AG04449 (cell line): ENCODE measurements at regions of chr11 and their contacts with region 1.

Region 1: GRCh38 chr11:130434521-130435223 is 6.3 kb upstream of the ADAMTS8 start:
- DNase-seq: no peak
- H3K4me3 ChIP-seq: peak overlapping the region; percentile 65
- CTCF ChIP-seq: peak; percentile 89

Region 2: GRCh38 chr11:130213143-130213978 is 221.3 kb before region 1 on chr11:
- CTCF ChIA-PET with region 1: interaction called, 44 read pairs
- POLR2A ChIA-PET with region 1: no interaction called
- DNase-seq: no peak
- H3K4me3 ChIP-seq: no peak overlapping the region
- CTCF ChIP-seq: peak; percentile 93

Region 3: DNA sequence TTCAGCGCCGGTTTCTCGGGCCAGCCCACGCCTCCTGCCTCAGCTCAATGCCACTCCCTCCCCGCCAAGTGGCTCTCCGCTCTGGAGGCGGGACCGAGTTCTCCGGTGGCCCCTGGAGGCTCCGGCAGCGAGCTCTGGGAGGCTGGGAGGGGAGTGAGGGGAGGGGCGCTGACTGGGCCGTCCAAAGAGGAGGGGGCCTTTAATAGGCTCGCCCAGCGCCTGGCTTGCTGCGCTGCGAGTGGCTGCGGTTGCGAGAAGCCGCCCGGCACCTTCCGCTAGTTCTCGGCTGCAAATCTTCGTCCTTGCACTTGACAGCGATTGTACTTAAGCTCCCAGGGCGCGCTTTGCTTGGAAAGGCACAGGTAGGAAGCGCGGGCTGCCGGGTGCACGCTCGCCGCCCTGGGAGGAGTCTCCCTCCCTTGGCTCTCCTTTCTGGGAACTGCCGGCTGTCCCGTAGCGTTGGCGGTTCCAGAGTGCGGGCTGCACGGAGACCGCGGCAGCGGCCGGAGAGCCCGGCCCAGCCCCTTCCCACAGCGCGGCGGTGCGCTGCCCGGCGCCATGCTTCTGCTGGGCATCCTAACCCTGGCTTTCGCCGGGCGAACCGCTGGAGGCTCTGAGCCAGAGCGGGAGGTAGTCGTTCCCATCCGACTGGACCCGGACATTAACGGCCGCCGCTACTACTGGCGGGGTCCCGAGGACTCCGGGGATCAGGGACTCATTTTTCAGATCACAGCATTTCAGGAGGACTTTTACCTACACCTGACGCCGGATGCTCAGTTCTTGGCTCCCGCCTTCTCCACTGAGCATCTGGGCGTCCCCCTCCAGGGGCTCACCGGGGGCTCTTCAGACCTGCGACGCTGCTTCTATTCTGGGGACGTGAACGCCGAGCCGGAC is 14.0 kb after region 1 on chr11 and contains the start of gene ADAMTS15:
- CTCF ChIA-PET with region 1: interaction called, 11 read pairs
- POLR2A ChIA-PET with region 1: no interaction called
- DNase-seq: no peak
- H3K4me3 ChIP-seq: peak within 1 kb of the TSS; percentile 66
- CTCF ChIP-seq: no peak

Region 4: GRCh38 chr11:130839981-130840666 is 405.5 kb after region 1 on chr11:
- CTCF ChIA-PET with region 1: interaction called, 56 read pairs
- POLR2A ChIA-PET with region 1: no interaction called
- DNase-seq: no peak
- H3K4me3 ChIP-seq: no peak overlapping the region
- CTCF ChIP-seq: no peak

Region 5: GRCh38 chr11:130882138-130882551 is 447.5 kb after region 1 on chr11:
- CTCF ChIA-PET with region 1: interaction called, 168 read pairs
- POLR2A ChIA-PET with region 1: no interaction called
- DNase-seq: no peak
- H3K4me3 ChIP-seq: no peak overlapping the region
- CTCF ChIP-seq: no peak

Region 6: GRCh38 chr11:130979386-130979972 is 544.8 kb after region 1 on chr11:
- CTCF ChIA-PET with region 1: interaction called, 10 read pairs
- POLR2A ChIA-PET with region 1: no interaction called
- DNase-seq: no peak
- H3K4me3 ChIP-seq: no peak overlapping the region
- CTCF ChIP-seq: peak; percentile 48